GM12878 (cell line): ENCODE measurements at regions of chr21 and their contacts with region 1.

Region 1: DNA sequence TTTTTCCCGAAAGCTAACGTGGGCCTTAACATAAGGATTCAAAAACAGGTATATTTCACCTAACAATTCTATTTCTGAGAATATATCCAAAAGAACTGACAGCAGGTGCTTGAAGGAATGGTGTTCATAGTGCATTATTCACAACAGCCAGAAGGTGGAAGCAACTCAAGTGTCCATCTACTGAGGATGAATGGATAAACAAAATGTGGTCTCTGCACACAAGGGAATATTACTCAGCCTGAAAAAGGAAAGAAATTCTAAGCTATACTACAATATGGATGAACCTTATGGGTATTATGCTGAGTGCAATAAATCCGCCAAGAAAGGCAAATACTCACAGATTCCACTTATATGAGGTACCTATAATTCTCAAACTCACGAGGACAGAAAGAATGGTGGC is 6.1 kb upstream of the RIPPLY3 start:
- DNase-seq: no peak
- ATAC-seq: no peak
- H3K4me3 ChIP-seq: no peak overlapping the region
- H3K27ac ChIP-seq: no peak overlapping the region
- H3K4me1 ChIP-seq: no peaks in the 10 kb centered on the region
- H3K27me3 ChIP-seq: no peaks in the 10 kb centered on the region
- CTCF ChIP-seq: 0 out of 6 replicates have a peak, but pooled peaks of 1 of the 3 experiments have one; percentile 8
- EP300 ChIP-seq: no peak
- POLR2A ChIP-seq: no peak
- RAD21 ChIP-seq: no peak

Region 2: GRCh38 chr21:37079211-37079824 is 78.9 kb after region 1 on chr21:
- CTCF ChIA-PET with region 1: no interaction called
- POLR2A ChIA-PET with region 1: no interaction called
- RAD21 ChIA-PET with region 1: no interaction called
- SMC1A ChIA-PET with region 1: no interaction called
- in situ Hi-C with region 1: no loop called
- intact Hi-C with region 1: loop called (anchors 5 kb)
- DNase-seq: no peak
- ATAC-seq: peak; percentile 68
- H3K4me3 ChIP-seq: no peak overlapping the region
- H3K27ac ChIP-seq: no peak overlapping the region
- H3K4me1 ChIP-seq: no peaks in the 10 kb centered on the region
- H3K27me3 ChIP-seq: no peaks in the 10 kb centered on the region
- CTCF ChIP-seq: peak; percentile 7 to 33 (median 26); a peak in 4 of 6 replicates
- EP300 ChIP-seq: no peak
- POLR2A ChIP-seq: no peak
- RAD21 ChIP-seq: no peak

Region 3: DNA sequence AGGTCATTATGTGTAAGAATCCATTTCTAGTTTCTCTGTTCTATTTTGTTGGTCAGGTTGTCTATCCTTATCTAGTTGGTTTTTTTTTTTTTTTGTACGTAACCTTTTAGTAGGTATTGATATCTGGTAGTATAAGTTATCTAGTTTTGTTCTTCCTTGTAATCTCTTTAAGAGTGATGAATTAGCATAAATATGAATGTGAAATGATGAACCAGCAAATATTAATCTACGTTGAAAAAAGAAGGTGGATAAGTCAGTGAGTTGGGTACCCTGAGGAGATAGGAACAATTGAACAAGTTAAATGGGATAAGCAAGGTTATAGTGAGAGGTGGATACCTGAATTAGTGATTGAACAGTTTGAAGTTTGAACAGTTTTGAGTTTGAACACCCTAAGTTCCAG is 106.6 kb after region 1 on chr21:
- CTCF ChIA-PET with region 1: no interaction called
- POLR2A ChIA-PET with region 1: no interaction called
- RAD21 ChIA-PET with region 1: no interaction called
- SMC1A ChIA-PET with region 1: no interaction called
- in situ Hi-C with region 1: no loop called
- intact Hi-C with region 1: no loop called
- DNase-seq: no peak
- ATAC-seq: no peak
- H3K4me3 ChIP-seq: no peak overlapping the region
- H3K27ac ChIP-seq: no peak overlapping the region
- H3K4me1 ChIP-seq: no peaks in the 10 kb centered on the region
- H3K27me3 ChIP-seq: no peaks in the 10 kb centered on the region
- CTCF ChIP-seq: no peak
- EP300 ChIP-seq: no peak
- POLR2A ChIP-seq: no peak
- RAD21 ChIP-seq: no peak